Activated T-helper 1 cell treated with anti-CD3 and anti-CD28 coated beads, Interleukin-12 subunit alpha, Interleukin-12 subunit beta, Interleukin-2, Interleukin-4 antibody, amounts not matched to agents 30 ng/mL and 10 ng/mL and 1 ng/mL, durations not matched to agents 14 hours and 24 hours and 36 hours (primary cell): ENCODE measurements at regions of chr18 and their contacts with region 1.

Region 1: GRCh38 chr18:13585379-13586153 is 140.8 kb downstream of the FAM210A start:
- DNase-seq: no peak
- H3K4me3 Mint-ChIP-seq: no peak overlapping the region
- H3K27ac Mint-ChIP-seq: no peak overlapping the region
- H3K4me1 Mint-ChIP-seq: peaks cover 55% of the 10 kb centered on the region
- H3K27me3 Mint-ChIP-seq: no peaks in the 10 kb centered on the region

Region 2: DNA sequence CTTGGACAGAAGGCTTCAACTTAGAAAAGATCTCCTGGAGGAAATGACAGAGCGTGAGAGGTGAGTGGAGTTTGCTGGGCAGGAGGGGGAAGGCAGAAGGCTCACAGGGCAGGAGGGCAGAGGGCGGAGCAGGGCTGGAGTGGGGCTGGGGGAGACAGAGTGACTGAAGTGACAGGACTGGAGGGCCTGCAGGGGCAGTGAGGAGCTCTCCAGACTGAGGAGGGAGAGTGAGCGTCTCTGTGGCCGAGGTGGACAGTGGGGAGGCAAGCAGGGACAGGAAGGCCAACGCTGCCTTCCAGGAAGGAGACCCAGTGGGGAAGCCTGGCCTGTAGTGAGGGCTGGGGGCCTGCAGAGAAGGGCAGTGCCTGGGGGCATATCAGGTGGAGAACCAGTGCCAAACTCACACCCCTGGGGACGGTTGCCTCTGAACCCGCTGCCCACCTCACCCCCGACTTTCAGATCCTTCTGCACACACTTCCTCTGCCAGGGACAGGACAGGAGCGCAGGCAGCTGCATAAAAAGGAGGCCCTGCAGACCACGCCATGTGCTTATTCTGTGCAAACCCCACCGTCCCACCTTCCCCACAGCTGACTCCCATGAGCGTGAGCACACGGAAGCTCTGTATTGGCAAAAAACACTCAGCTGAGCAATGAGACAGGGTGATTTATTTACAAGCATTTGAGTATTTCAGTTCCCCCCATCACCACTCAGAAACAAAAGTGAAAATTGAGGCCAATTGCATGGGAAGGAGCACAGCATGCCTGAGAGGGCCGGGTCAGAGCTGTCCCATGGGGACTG is 103.5 kb before region 1 on chr18:
- intact Hi-C with region 1: no loop called
- DNase-seq: no peak
- H3K4me3 Mint-ChIP-seq: no peak overlapping the region
- H3K27ac Mint-ChIP-seq: no peak overlapping the region
- H3K4me1 Mint-ChIP-seq: peaks cover 18% of the 10 kb centered on the region
- H3K27me3 Mint-ChIP-seq: no peaks in the 10 kb centered on the region

Region 3: GRCh38 chr18:13597068-13597467 is 11.5 kb after region 1 on chr18:
- intact Hi-C with region 1: loop called (anchors 1 kb)
- DNase-seq: no peak
- H3K4me3 Mint-ChIP-seq: no peak overlapping the region
- H3K27ac Mint-ChIP-seq: no peak overlapping the region
- H3K4me1 Mint-ChIP-seq: peaks cover 8% of the 10 kb centered on the region
- H3K27me3 Mint-ChIP-seq: no peaks in the 10 kb centered on the region